ENCODE measurements at regions of chr15 and their contacts with region 1.

Region 1: GRCh38 chr15:71448688-71449114 is 333.4 kb downstream of the THSD4 start:
- DNase-seq: peak; percentile 79
- H3K4me3 ChIP-seq: no peak overlapping the region
- H3K27ac ChIP-seq: peak overlapping the region; percentile 70 to 80
- H3K4me1 ChIP-seq: peaks cover 2% of the 10 kb centered on the region
- H3K27me3 ChIP-seq: no peaks in the 10 kb centered on the region
- CTCF ChIP-seq: peak; percentile 60 to 96 (median 88)
- POLR2A ChIP-seq: no peak

Region 2: GRCh38 chr15:70892002-70892914 is 556.4 kb before region 1 on chr15 and contains the starts of genes LRRC49 and THAP10:
- intact Hi-C with region 1: loop called (anchors 10 kb)
- DNase-seq: peak; percentile 91
- H3K4me3 ChIP-seq: peak within 1 kb of the TSS; percentile 72 to 80
- H3K27ac ChIP-seq: peak within 1 kb of the TSS; percentile 84 to 85
- H3K4me1 ChIP-seq: peaks cover 5% of the 10 kb centered on the region
- H3K27me3 ChIP-seq: no peaks in the 10 kb centered on the region
- CTCF ChIP-seq: no peak
- POLR2A ChIP-seq: peak; percentile 59
- total RNA-seq, gene LRRC49: 9.8 to 13.3 TPM
- total RNA-seq, gene THAP10: 3.2 to 6.6 TPM

Region 3: DNA sequence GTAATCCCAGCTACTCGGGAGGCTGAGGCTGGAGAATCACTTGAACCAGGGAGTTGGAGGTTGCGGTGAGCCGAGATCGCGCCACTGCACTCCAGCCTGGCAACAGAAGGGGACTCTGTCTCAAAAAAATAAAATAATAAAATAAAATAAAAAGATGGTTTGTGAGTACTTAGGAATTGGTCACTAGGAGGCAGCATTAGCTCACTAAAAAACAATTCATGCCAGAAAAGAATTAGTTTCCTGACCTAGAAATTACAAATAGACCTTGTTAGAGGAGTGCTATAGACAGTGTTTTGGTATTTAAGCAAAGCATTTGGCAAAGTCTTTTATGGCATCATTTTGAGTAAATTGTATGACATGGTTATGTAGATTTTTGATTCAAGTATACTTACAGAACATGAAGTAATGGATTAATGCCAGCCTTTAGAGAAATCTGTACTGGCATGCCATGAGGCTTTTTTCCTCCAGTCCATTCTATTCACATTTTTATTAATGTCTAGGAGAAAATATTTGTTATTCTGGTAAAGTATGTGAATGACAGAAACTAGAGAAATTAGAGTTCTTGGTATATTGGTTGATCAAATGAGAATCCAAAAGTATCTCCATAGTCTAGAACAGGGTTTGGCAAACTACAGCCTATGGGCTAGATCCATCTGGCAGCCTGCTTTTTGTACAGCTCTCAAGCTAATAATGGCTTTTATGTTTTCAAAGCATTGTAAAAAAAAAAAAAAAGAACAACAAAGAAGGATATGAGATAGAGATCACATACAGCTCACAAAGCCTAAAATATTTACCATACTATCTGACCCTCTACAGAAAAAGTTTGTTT is 474.5 kb before region 1 on chr15:
- intact Hi-C with region 1: loop called (anchors 10 kb)
- DNase-seq: no peak
- H3K4me3 ChIP-seq: no peak overlapping the region
- H3K27ac ChIP-seq: peak overlapping the region in 1 of 2 donors; percentile 31
- H3K4me1 ChIP-seq: no peaks in the 10 kb centered on the region
- H3K27me3 ChIP-seq: no peaks in the 10 kb centered on the region
- CTCF ChIP-seq: peak in 3 of 4 experiments; percentile 44 to 66 (median 64)
- POLR2A ChIP-seq: no peak

Region 4: DNA sequence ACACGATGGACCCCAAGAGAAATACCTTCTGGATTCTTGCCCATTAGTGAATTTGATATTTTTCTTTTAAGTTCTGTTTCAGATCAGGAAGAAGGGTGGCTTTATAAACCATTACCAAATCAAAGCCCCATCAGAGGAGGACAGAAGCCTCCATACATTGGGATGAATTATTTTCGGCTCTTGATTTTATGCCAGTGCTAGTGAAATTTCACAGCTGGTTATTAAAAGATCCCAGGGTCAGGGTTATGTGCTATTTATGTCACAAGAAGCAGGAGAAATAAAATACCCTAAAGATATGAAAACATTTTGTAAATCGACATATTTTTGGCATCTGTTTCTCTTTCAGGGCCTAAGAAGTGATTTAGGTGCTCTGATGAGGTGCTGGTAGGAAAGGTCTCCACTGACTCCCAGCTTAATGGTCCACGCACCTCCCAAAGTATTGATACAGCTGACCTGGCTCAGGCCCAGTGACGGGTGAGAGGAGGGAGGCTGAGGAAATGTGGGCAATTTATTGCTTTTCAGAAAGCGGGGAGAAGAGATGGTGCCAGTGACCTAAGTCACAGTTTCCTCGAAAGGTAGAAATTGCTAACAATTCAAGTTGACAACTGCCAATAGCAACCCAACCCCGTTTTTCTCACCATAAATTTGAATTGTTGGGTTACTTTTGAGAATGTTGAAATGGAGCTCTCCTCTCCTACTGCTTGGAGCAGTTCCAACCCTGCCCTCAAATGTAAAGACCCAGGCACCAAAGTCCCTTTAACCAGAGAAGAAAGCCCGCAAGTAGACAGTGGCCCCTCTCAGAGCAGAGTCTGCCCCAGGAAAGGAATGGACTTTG is 46.1 kb after region 1 on chr15:
- intact Hi-C with region 1: no loop called
- DNase-seq: no peak
- H3K4me3 ChIP-seq: no peak overlapping the region
- H3K27ac ChIP-seq: no peak overlapping the region
- H3K4me1 ChIP-seq: no peaks in the 10 kb centered on the region
- H3K27me3 ChIP-seq: no peaks in the 10 kb centered on the region
- CTCF ChIP-seq: no peak
- POLR2A ChIP-seq: no peak

Region 5: GRCh38 chr15:71651750-71652186 is 203.1 kb after region 1 on chr15:
- intact Hi-C with region 1: loop called (anchors 5 kb)
- DNase-seq: peak; percentile 59
- H3K4me3 ChIP-seq: no peak overlapping the region
- H3K27ac ChIP-seq: peak overlapping the region; percentile 7 to 33
- H3K4me1 ChIP-seq: no peaks in the 10 kb centered on the region
- H3K27me3 ChIP-seq: no peaks in the 10 kb centered on the region
- CTCF ChIP-seq: peak; percentile 15 to 76 (median 59)
- POLR2A ChIP-seq: no peak

Region 6: GRCh38 chr15:71728881-71729280 is 280.2 kb after region 1 on chr15:
- intact Hi-C with region 1: loop called (anchors 2 kb)
- DNase-seq: no peak
- H3K4me3 ChIP-seq: no peak overlapping the region
- H3K27ac ChIP-seq: peak overlapping the region in 1 of 2 donors; percentile 2
- H3K4me1 ChIP-seq: no peaks in the 10 kb centered on the region
- H3K27me3 ChIP-seq: no peaks in the 10 kb centered on the region
- CTCF ChIP-seq: no peak
- POLR2A ChIP-seq: no peak

Region 7: GRCh38 chr15:71800835-71801745 is 352.4 kb after region 1 on chr15:
- intact Hi-C with region 1: loop called (anchors 2 kb)
- DNase-seq: peak; percentile 55
- H3K4me3 ChIP-seq: no peak overlapping the region
- H3K27ac ChIP-seq: no peak overlapping the region
- H3K4me1 ChIP-seq: no peaks in the 10 kb centered on the region
- H3K27me3 ChIP-seq: no peaks in the 10 kb centered on the region
- CTCF ChIP-seq: peak; percentile 73 to 98 (median 92)
- POLR2A ChIP-seq: no peak